Uterus (tissue), 4 donors: ENCODE measurements at regions of chr9 and their contacts with region 1.

Region 1: DNA sequence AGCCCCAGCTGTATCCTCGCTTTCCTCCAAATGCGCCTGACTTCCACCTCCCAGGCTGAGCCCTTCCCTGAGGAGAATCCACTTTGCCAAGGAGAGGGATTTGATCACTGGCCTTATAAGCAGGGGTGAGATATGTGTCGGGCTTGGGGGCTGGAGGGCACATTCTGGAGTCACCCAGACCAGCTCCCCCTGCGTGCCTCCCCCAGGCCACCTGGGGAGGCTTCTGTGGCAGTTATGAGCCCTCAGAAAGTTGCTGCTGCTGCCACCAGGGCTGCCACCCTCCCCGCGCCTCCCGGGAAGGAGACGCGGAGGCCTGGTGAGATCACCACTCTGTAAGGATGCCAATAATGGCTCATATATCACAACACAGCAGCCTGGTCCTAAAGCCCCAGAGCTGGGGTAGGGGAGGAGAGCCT is 211.5 kb downstream of the PAPPA start:
- DNase-seq: peak; percentile 75 to 80
- H3K4me3 ChIP-seq: peak overlapping the region in 1 of 2 donors; percentile 4
- H3K27ac ChIP-seq: peak overlapping the region; percentile 84 to 85
- H3K4me1 ChIP-seq: no peaks in the 10 kb centered on the region
- H3K27me3 ChIP-seq: no peaks in the 10 kb centered on the region
- CTCF ChIP-seq: peak in 2 of 4 experiments; percentile 18 to 45
- POLR2A ChIP-seq: peak in 1 of 2 donors; percentile 45

Region 2: GRCh38 chr9:116149844-116150243 is 215.2 kb before region 1 on chr9:
- intact Hi-C with region 1: loop called (anchors 10 kb)
- DNase-seq: peak in 1 of 2 donors; percentile 33
- H3K4me3 ChIP-seq: no peak overlapping the region
- H3K27ac ChIP-seq: no peak overlapping the region
- H3K4me1 ChIP-seq: no peaks in the 10 kb centered on the region
- H3K27me3 ChIP-seq: no peaks in the 10 kb centered on the region
- CTCF ChIP-seq: peak; percentile 24 to 68 (median 44)
- POLR2A ChIP-seq: no peak